ENCODE measurements at regions of chr2 and their contacts with region 1.

Region 1: DNA sequence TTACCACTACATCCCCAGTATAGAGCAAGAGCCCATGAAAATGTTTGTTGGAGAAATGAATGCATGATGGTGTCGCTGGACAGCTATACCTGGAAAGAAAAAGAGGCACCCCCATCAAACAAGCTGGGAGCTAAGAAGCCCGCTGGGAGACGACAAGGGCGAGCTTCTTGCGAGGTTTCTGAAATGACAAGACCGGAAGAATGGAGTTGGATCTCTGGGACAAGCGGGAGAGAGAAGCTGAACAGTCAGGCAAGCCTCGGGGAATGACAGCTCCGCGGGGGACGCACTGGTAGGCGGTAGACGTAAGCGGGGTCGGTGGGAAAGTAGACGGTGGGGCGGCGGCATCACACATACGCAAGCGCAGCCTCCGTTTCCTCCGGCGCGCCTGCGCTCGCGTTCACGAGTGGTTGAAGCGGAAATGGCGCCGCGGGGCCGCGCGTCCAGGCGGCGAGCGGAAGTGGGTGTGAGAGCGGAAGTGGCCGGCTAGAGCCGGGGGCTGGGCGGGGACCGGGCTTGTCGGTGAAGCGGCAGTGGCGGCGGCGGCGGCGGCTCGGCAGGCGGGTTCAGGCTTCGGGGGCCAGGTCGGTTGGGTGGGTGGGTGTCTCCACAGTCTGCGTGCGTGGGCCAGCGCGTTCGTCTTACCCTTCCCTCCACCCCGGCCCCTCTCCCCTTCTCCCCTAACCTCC is at the start of gene ARPC2:
- DNase-seq: peak; percentile 96
- H3K4me3 ChIP-seq: peak within 1 kb of the TSS; percentile 82
- H3K27ac ChIP-seq: peak within 1 kb of the TSS; percentile 94
- H3K4me1 ChIP-seq: peaks cover 20% of the 10 kb centered on the region
- H3K27me3 ChIP-seq: no peaks in the 10 kb centered on the region
- CTCF ChIP-seq: no peak
- total RNA-seq, gene ARPC2: 282 to 346 TPM

Region 2: GRCh38 chr2:217610401-217611075 is 606.3 kb before region 1 on chr2:
- intact Hi-C with region 1: no loop called
- DNase-seq: no peak
- H3K4me3 ChIP-seq: no peak overlapping the region
- H3K27ac ChIP-seq: no peak overlapping the region
- H3K4me1 ChIP-seq: no peaks in the 10 kb centered on the region
- H3K27me3 ChIP-seq: no peaks in the 10 kb centered on the region
- CTCF ChIP-seq: no peak

Region 3: DNA sequence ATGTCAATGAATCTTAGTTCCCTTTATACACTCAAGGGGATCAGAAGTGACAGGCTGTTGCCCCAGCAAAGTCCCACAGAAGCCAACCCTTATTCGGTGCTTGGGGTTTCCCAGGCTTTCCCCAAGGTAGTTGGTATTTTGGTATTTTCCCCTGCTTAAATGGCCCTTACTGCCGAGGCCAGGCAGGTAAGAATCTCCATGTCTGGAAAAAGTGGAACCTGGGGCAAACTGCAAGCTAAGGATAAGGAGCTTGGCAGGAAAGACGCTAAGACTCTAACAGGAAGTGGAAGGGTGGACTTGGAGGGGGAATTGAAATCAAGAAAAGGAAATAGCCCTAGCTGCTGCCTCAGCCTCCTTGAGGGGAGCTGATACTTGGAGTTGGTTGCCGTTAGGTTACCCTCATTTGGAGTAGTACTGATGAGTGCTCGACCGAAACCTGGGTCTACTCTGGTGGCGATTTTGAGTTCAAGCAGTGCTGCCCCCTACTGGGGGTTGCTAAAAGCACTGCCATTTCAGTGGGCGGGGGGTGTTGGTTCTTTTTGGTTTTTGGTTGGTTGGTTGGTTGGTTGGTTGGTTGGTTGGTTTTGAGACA is 40.7 kb after region 1 on chr2:
- intact Hi-C with region 1: loop called (anchors 5 kb)
- DNase-seq: no peak
- H3K4me3 ChIP-seq: no peak overlapping the region
- H3K27ac ChIP-seq: peak overlapping the region; percentile 11
- H3K4me1 ChIP-seq: peaks cover 7% of the 10 kb centered on the region
- H3K27me3 ChIP-seq: no peaks in the 10 kb centered on the region
- CTCF ChIP-seq: no peak

Region 4: GRCh38 chr2:218395797-218396687 is 179.2 kb after region 1 on chr2:
- intact Hi-C with region 1: no loop called
- DNase-seq: peak; percentile 94
- H3K4me3 ChIP-seq: peak overlapping the region; percentile 97
- H3K27ac ChIP-seq: peak overlapping the region; percentile 100
- H3K4me1 ChIP-seq: peaks cover 4% of the 10 kb centered on the region
- H3K27me3 ChIP-seq: no peaks in the 10 kb centered on the region
- CTCF ChIP-seq: peak; percentile 84